PC-9 (cell line): ENCODE measurements at regions of chr3 and their contacts with region 1.

Region 1: GRCh38 chr3:193248848-193249468 is 7.9 kb downstream of the PLAAT1 start:
- DNase-seq: no peak
- H3K4me3 ChIP-seq: no peak overlapping the region
- H3K27ac ChIP-seq: no peak overlapping the region
- H3K4me1 ChIP-seq: no peaks in the 10 kb centered on the region
- H3K27me3 ChIP-seq: peaks cover 6% of the 10 kb centered on the region; the same call in 1 of the 2 replicates
- CTCF ChIP-seq: no peak

Region 2: GRCh38 chr3:193262709-193263108 is 13.8 kb after region 1 on chr3:
- CTCF ChIA-PET with region 1: no interaction called
- POLR2A ChIA-PET with region 1: no interaction called
- intact Hi-C with region 1: loop called (anchors 1 kb)
- DNase-seq: no peak
- H3K4me3 ChIP-seq: no peak overlapping the region
- H3K27ac ChIP-seq: no peak overlapping the region
- H3K4me1 ChIP-seq: no peaks in the 10 kb centered on the region
- H3K27me3 ChIP-seq: no peaks in the 10 kb centered on the region
- CTCF ChIP-seq: 0 out of 2 replicates have a peak, but pooled peaks have one; percentile 22